ENCODE measurements at regions of chr5 and their contacts with region 1.

Region 1: GRCh38 chr5:7745882-7746610 is 104.9 kb downstream of the CFAP90 start:
- DNase-seq: peak; percentile 67
- ATAC-seq: no peak
- H3K4me3 Mint-ChIP-seq: no peak overlapping the region
- H3K27ac Mint-ChIP-seq: no peak overlapping the region
- H3K4me1 Mint-ChIP-seq: no peaks in the 10 kb centered on the region
- H3K27me3 Mint-ChIP-seq: peaks cover 6% of the 10 kb centered on the region
- CTCF ChIP-seq: peak; percentile 74

Region 2: DNA sequence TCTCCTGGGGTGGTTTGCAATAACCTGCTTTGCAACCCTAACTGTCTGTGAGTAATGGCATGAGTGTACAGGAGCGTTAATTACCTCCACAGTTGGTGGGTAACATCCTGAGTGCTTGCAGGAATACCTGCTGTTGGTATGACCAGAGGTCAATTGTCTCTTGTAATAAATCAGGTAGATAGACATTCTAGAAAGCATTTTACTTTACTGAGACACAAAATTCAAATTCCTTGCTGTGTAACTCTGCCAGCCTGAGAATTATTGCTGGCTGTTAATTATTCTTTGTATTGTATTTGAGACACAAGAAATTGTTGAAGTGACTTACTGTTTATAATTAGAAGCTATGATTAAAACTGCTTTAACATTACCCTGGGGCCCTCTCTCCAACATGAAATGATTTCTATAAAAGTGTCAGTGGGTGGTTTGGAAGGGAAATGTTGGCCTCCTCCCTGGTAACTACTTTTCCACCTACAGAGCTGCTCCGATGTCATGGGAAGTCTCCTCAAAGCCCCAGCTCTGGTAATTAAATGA is 500.9 kb before region 1 on chr5:
- CTCF ChIA-PET with region 1: no interaction called
- POLR2A ChIA-PET with region 1: no interaction called
- intact Hi-C with region 1: loop called (anchors 10 kb)
- DNase-seq: no peak
- ATAC-seq: no peak
- H3K4me3 Mint-ChIP-seq: no peak overlapping the region
- H3K27ac Mint-ChIP-seq: no peak overlapping the region
- H3K4me1 Mint-ChIP-seq: no peaks in the 10 kb centered on the region
- H3K27me3 Mint-ChIP-seq: no peaks in the 10 kb centered on the region
- CTCF ChIP-seq: no peak

Region 3: DNA sequence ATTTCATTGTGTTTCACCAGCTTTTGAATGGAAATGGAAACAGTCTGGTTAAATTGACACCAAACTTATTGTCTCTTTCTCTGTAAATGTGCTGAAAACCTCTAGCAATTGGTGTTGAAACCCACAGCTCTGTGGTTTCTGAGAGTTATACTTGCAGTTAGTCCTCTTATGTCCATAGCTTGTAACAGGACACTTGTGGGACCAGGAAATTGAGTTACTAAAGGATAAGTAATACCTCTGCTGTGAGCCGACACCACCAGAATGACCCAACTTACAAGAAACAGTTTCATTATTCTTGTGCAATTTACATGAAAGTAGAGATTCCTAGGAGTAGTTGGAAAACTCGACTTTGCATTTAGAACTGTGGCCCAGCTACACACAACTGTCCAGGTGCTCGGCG is 86.6 kb before region 1 on chr5:
- CTCF ChIA-PET with region 1: no interaction called
- POLR2A ChIA-PET with region 1: no interaction called
- intact Hi-C with region 1: no loop called
- DNase-seq: no peak
- ATAC-seq: no peak
- H3K4me3 Mint-ChIP-seq: no peak overlapping the region
- H3K27ac Mint-ChIP-seq: no peak overlapping the region
- H3K4me1 Mint-ChIP-seq: no peaks in the 10 kb centered on the region
- H3K27me3 Mint-ChIP-seq: no peaks in the 10 kb centered on the region
- CTCF ChIP-seq: no peak

Measured in activated CD8-positive, alpha-beta T cell treated with anti-CD3 and anti-CD28 coated beads for 36 hours (primary cell).